ENCODE measurements at regions of chr2 and their contacts with region 1.

Region 1: DNA sequence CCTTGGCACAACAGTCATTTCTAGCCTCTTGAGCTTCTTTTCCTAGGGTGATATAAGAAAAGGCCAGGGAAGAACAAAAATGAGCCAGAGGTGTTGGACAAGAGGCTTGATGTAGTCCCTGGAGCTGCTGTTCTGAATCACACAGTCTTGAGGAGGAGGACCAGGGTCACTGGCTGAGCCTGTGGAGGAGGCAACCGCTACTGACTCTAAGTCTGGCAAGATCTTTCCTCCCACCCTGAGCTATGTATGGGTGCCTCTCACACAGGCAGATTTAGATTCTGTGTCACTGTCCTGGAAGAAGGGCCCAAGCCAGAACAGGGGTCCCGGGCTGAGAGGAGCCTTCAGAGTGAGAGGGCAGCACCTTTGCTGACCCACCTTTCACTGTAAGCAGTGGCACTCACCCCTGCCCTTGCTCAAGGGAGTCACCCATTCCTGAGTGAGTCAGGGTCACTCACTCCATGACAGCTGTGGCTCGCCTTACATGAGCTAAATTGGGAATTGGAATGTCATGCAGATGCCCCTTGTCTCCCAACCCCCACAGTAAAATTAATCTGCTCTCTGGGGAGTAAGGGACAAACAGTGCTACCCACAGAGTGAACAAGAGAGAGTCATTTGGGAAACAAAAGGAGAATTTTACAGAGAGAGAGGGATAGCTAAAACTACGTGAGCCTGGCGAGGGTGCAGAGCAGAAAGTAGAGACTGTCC is at the start of gene TRIM54:
- DNase-seq: no peak
- H3K4me3 ChIP-seq: no peak within 1 kb of the TSS
- H3K27ac ChIP-seq: no peak within 1 kb of the TSS
- H3K4me1 ChIP-seq: no peaks in the 10 kb centered on the region
- H3K27me3 ChIP-seq: no peaks in the 10 kb centered on the region
- CTCF ChIP-seq: no peak
- total RNA-seq, gene TRIM54: 0.24 TPM in 1 of 2 donors, not detected in the other

Region 2: DNA sequence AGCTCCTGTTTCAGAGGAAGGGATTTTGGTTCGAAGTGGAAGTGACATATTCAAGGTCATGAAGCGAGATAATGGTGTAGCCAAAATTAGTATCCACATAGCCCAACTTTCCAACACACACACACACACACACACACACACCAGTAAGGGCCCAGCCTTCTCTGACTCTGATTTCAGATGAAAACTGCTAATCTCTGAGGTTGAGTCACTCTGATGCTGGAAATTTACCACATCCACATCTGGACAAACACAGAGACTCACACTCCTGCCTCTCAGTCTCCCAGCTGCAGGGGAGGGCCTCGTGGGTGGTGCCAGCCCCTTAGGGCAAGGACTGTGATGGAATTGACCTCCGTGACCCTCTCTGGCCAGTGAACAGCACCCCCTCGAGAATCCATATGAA is 546.9 kb before region 1 on chr2:
- intact Hi-C with region 1: no loop called
- DNase-seq: no peak
- H3K4me3 ChIP-seq: no peak overlapping the region
- H3K27ac ChIP-seq: no peak overlapping the region
- H3K4me1 ChIP-seq: no peaks in the 10 kb centered on the region
- H3K27me3 ChIP-seq: no peaks in the 10 kb centered on the region
- CTCF ChIP-seq: no peak

Region 3: GRCh38 chr2:26968001-26968400 is 314.0 kb before region 1 on chr2:
- intact Hi-C with region 1: loop called (anchors 10 kb)
- DNase-seq: peak; percentile 39
- H3K4me3 ChIP-seq: no peak overlapping the region
- H3K27ac ChIP-seq: peak overlapping the region; percentile 73
- H3K4me1 ChIP-seq: no peaks in the 10 kb centered on the region
- H3K27me3 ChIP-seq: no peaks in the 10 kb centered on the region
- CTCF ChIP-seq: no peak

Region 4: DNA sequence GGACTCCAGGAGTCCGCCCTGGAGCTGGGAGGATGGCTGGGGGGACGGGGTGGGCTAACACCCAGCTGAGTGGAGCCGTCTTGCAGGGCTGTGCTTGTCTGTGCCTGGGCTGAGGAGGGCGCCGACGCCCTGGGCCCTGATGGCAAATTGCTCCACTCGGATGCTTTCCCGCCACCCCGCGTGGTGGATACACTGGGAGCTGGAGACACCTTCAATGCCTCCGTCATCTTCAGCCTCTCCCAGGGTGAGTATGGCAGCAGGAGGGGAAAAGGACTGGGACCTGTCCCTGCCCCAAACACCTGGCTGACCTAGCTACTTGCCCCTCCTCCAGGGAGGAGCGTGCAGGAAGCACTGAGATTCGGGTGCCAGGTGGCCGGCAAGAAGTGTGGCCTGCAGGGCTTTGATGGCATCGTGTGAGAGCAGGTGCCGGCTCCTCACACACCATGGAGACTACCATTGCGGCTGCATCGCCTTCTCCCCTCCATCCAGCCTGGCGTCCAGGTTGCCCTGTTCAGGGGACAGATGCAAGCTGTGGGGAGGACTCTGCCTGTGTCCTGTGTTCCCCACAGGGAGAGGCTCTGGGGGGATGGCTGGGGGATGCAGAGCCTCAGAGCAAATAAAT is 182.6 kb before region 1 on chr2:
- intact Hi-C with region 1: loop called (anchors 2 kb)
- DNase-seq: no peak
- H3K4me3 ChIP-seq: no peak overlapping the region
- H3K27ac ChIP-seq: no peak overlapping the region
- H3K4me1 ChIP-seq: no peaks in the 10 kb centered on the region
- H3K27me3 ChIP-seq: no peaks in the 10 kb centered on the region
- CTCF ChIP-seq: no peak

Region 5: GRCh38 chr2:27573452-27573851 is 291.4 kb after region 1 on chr2:
- intact Hi-C with region 1: no loop called
- DNase-seq: no peak
- H3K4me3 ChIP-seq: no peak overlapping the region
- H3K27ac ChIP-seq: no peak overlapping the region
- H3K4me1 ChIP-seq: no peaks in the 10 kb centered on the region
- H3K27me3 ChIP-seq: no peaks in the 10 kb centered on the region
- CTCF ChIP-seq: no peak